HEK293T (cell line): ENCODE measurements at regions of chr3 and their contacts with region 1.

Region 1: GRCh38 chr3:128041344-128041743 is 10.9 kb upstream of the SEC61A1 start:
- DNase-seq: no peak

Region 2: GRCh38 chr3:128051837-128052594 is 10.7 kb after region 1 on chr3 and contains the start of gene SEC61A1:
- CTCF ChIA-PET with region 1: no interaction called
- POLR2A ChIA-PET with region 1: interaction called, 11 read pairs
- DNase-seq: peak; percentile 96